CD4-positive, alpha-beta memory T cell (primary cell): ENCODE measurements at regions of chr11 and their contacts with region 1.

Region 1: DNA sequence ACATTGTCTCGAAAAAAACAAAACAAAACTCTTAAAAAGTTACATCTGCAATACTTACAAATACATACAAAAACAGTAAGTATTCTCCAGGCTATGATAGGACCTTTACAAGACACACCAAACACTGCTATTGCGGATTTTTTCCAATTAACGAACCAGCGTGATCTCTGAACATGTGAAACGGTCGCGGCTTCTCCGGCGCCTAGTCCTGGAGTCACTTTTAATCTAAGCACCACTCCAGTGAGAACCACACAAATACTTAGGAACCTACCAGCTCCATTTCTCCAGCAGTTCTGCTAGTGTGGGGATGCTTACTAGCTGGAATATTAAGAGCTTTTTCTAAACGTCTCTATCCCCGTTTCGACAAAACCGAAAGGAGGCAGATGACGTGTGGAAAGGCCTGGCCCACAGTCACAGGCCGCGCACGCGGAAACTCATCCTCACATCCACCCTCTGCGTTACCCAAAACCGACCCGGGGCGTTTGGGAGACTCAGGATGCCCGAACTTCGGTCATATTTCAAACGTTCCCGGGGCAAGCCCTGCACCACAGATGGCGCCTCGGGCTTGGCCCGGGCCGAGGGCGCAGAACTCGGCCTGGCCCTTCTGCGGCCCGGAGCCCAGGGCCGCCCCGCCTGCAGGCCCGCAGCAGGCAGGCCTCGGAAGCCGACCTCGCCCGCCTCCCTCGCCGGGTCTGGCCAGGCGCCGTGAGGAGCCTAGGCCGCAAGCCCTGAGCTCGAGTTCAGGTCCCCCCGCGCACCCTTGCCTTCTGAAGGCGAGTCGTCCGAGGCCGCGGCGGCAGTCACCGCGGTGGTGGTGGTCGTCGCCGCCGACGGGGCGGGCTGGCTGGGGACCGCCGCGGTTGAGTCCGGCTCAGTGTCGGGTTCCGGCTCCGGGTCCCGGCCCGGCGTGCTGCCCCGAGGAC is 575 bp downstream of the FNBP4 start:
- DNase-seq: peak; percentile 79 to 86 (median 83)
- H3K4me3 ChIP-seq: peak overlapping the region; percentile 83 to 85
- H3K4me3 Mint-ChIP-seq: peak overlapping the region; percentile 96 to 100 (median 96)
- H3K27ac ChIP-seq: peak overlapping the region; percentile 99
- H3K27ac Mint-ChIP-seq: peak overlapping the region; percentile 98 to 100 (median 100)
- H3K4me1 ChIP-seq: peaks cover 25% of the 10 kb centered on the region
- H3K4me1 Mint-ChIP-seq: peaks cover 18 to 41% (median 23%) of the 10 kb centered on the region in 4 donors
- H3K27me3 ChIP-seq: no peaks in the 10 kb centered on the region
- H3K27me3 Mint-ChIP-seq: no peaks in the 10 kb centered on the region

Region 2: DNA sequence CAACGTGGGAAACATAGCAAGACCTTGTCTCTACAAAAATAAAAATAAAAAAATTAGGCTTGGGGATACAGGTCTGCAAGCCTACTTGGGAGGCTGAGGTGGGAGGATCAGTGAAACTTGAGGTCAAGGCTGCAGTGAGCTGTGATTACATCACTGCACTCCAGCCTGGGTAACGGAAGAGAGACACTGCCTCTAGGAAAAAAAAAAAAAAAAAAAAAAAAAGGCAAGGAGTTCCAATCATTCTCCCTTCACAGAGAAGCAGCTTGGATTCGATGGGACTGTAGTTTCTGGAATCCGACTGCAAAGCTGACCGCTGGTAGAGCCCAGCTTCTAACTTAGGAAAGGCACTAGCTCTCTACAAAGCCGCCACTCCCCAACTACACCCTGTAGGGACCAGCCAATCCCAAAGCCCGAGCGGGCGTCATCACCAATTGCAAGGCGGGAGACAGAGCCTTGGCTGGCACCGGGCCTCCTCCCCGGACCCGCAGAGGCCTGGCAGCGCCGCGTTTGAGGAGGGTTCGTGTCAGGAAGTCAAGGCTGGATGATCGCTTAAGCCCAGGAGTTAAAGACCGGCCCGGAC is 552.5 kb before region 1 on chr11:
- CTCF ChIA-PET with region 1: no interaction called
- POLR2A ChIA-PET with region 1: interaction called, 7 read pairs
- intact Hi-C with region 1: loop called (anchors 5 kb)
- DNase-seq: peak; percentile 79 to 88 (median 80)
- H3K4me3 ChIP-seq: peak overlapping the region; percentile 57 to 95
- H3K4me3 Mint-ChIP-seq: peak overlapping the region; percentile 99 to 100 (median 99)
- H3K27ac ChIP-seq: peak overlapping the region; percentile 81
- H3K27ac Mint-ChIP-seq: peak overlapping the region; percentile 98 to 100 (median 99)
- H3K4me1 ChIP-seq: peaks cover 37% of the 10 kb centered on the region
- H3K4me1 Mint-ChIP-seq: peaks cover 23 to 39% (median 28%) of the 10 kb centered on the region in 4 donors
- H3K27me3 ChIP-seq: no peaks in the 10 kb centered on the region
- H3K27me3 Mint-ChIP-seq: no peaks in the 10 kb centered on the region

Region 3: GRCh38 chr11:47426061-47426956 is 340.3 kb before region 1 on chr11 and contains the start of gene PSMC3:
- CTCF ChIA-PET with region 1: no interaction called
- POLR2A ChIA-PET with region 1: no interaction called
- intact Hi-C with region 1: loop called (anchors 1 kb)
- DNase-seq: peak; percentile 94 to 97 (median 96)
- H3K4me3 ChIP-seq: peak within 1 kb of the TSS; percentile 64 to 91
- H3K4me3 Mint-ChIP-seq: peak within 1 kb of the TSS; percentile 99 to 100 (median 100)
- H3K27ac ChIP-seq: peak within 1 kb of the TSS; percentile 85
- H3K27ac Mint-ChIP-seq: peak within 1 kb of the TSS; percentile 92 to 99 (median 99)
- H3K4me1 ChIP-seq: peaks cover 18% of the 10 kb centered on the region
- H3K4me1 Mint-ChIP-seq: peaks cover 12 to 32% (median 22%) of the 10 kb centered on the region in 4 donors
- H3K27me3 ChIP-seq: no peaks in the 10 kb centered on the region
- H3K27me3 Mint-ChIP-seq: no peaks in the 10 kb centered on the region
- total RNA-seq, gene PSMC3: 53.9 to 59.6 TPM

Region 4: GRCh38 chr11:47578524-47579460 is 187.8 kb before region 1 on chr11 and contains the starts of genes KBTBD4 and NDUFS3:
- CTCF ChIA-PET with region 1: no interaction called
- POLR2A ChIA-PET with region 1: interaction called, 4 read pairs
- intact Hi-C with region 1: loop called (anchors 5 kb)
- DNase-seq: peak; percentile 87 to 90 (median 88)
- H3K4me3 ChIP-seq: peak within 1 kb of the TSS; percentile 80 to 93
- H3K4me3 Mint-ChIP-seq: peak within 1 kb of the TSS; percentile 97 to 100 (median 100)
- H3K27ac ChIP-seq: peak within 1 kb of the TSS; percentile 83
- H3K27ac Mint-ChIP-seq: peak within 1 kb of the TSS; percentile 96 to 100 (median 100)
- H3K4me1 ChIP-seq: peaks cover 42% of the 10 kb centered on the region
- H3K4me1 Mint-ChIP-seq: peaks cover 19 to 48% (median 35%) of the 10 kb centered on the region in 4 donors
- H3K27me3 ChIP-seq: no peaks in the 10 kb centered on the region
- H3K27me3 Mint-ChIP-seq: peaks cover 0 to 1% of the 10 kb centered on the region in 2 donors
- total RNA-seq, gene KBTBD4: 21.2 to 22.5 TPM
- total RNA-seq, gene NDUFS3: 70.9 to 71.0 TPM

Region 5: DNA sequence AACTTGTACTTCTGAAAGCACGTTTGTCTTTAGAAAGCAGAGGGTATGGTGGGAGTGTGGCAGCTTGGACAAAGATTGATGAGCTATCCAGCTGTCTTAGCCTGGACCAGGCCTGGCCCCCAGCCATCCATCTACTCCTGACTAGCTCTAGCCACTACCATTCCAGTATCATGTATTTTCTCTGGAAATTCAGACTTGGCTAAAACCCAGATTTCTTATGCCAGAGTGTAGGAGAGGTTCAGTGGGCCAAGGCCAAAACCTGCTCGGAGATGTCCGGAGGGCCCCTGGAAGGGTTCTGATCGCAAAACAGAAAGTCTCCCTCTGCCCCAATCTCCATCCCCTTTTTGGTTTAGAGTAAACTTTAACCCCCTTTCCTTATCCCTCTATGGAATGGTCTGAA is 99.4 kb before region 1 on chr11:
- CTCF ChIA-PET with region 1: no interaction called
- POLR2A ChIA-PET with region 1: no interaction called
- intact Hi-C with region 1: no loop called
- DNase-seq: no peak
- H3K4me3 ChIP-seq: no peak overlapping the region
- H3K4me3 Mint-ChIP-seq: no peak overlapping the region
- H3K27ac ChIP-seq: no peak overlapping the region
- H3K27ac Mint-ChIP-seq: no peak overlapping the region
- H3K4me1 ChIP-seq: no peaks in the 10 kb centered on the region
- H3K4me1 Mint-ChIP-seq: peaks cover 0 to 2% (median under 1%) of the 10 kb centered on the region in 4 donors
- H3K27me3 ChIP-seq: no peaks in the 10 kb centered on the region
- H3K27me3 Mint-ChIP-seq: peaks cover 0 to 1% of the 10 kb centered on the region in 2 donors

Region 6: DNA sequence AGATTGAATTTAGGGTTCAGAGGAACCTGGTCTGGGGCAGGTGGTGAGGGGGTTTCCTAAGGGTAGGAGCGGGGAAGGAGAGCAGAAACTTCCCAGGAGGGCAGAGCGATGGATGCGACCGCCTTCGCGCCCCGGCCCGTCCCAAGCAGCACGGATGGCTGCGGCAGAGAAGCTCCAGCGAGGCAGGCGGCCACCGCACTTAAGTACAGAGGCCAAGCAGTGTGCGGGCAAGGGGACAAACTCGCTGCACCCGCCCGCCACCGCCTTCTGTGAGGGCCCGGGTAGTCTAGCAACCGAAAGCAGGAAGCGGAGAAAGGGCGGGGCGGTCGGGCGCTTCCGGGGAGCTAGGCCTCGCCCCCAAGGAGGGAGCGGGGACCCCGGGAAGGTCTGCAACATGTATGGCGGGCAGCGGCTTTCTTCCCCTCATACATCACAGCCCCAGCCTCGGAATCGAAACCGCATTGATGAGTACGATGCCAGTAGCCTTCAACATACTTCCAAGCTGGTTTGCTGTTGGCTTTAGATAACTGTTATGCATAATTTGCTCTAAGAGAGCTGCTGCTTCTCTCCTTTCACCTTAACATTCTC is 51.4 kb before region 1 on chr11 and contains the start of gene AGBL2:
- CTCF ChIA-PET with region 1: no interaction called
- POLR2A ChIA-PET with region 1: interaction called, 36 read pairs
- intact Hi-C with region 1: loop called (anchors 1 kb)
- DNase-seq: peak; percentile 79 to 87 (median 80)
- H3K4me3 ChIP-seq: peak within 1 kb of the TSS; percentile 76 to 96
- H3K4me3 Mint-ChIP-seq: peak within 1 kb of the TSS; percentile 94 to 99 (median 98)
- H3K27ac ChIP-seq: peak within 1 kb of the TSS; percentile 92
- H3K27ac Mint-ChIP-seq: peak within 1 kb of the TSS; percentile 97 to 99 (median 98)
- H3K4me1 ChIP-seq: peaks cover 14% of the 10 kb centered on the region
- H3K4me1 Mint-ChIP-seq: peaks cover 7 to 25% (median 16%) of the 10 kb centered on the region in 4 donors
- H3K27me3 ChIP-seq: no peaks in the 10 kb centered on the region
- H3K27me3 Mint-ChIP-seq: no peaks in the 10 kb centered on the region
- total RNA-seq, gene AGBL2: 7.8 to 8.1 TPM

Region 7: DNA sequence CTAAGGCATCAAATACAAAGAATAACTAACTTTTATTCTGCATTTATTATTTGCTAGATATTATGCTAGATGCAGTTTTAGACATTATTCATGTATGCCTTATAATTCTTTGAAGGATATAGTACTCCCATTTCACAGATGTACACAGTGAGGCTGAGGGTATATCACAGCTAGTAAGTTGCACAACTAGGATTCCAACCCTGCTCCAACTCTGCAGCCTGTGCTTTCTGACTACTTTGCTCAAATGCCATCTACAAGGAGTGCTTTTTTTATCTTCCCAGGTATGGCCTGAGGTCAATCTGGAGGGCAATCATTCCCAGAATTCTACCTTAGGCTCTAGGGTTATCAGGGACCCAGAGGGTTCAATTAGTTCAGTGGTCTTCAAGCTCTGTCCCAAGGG is 53.2 kb after region 1 on chr11:
- CTCF ChIA-PET with region 1: no interaction called
- POLR2A ChIA-PET with region 1: no interaction called
- intact Hi-C with region 1: no loop called
- DNase-seq: no peak
- H3K4me3 ChIP-seq: no peak overlapping the region
- H3K4me3 Mint-ChIP-seq: no peak overlapping the region
- H3K27ac ChIP-seq: no peak overlapping the region
- H3K27ac Mint-ChIP-seq: peak overlapping the region in 3 of 7 donors; percentile 36 to 69 (median 61)
- H3K4me1 ChIP-seq: no peaks in the 10 kb centered on the region
- H3K4me1 Mint-ChIP-seq: no peaks in the 10 kb centered on the region
- H3K27me3 ChIP-seq: no peaks in the 10 kb centered on the region
- H3K27me3 Mint-ChIP-seq: no peaks in the 10 kb centered on the region

Region 8: DNA sequence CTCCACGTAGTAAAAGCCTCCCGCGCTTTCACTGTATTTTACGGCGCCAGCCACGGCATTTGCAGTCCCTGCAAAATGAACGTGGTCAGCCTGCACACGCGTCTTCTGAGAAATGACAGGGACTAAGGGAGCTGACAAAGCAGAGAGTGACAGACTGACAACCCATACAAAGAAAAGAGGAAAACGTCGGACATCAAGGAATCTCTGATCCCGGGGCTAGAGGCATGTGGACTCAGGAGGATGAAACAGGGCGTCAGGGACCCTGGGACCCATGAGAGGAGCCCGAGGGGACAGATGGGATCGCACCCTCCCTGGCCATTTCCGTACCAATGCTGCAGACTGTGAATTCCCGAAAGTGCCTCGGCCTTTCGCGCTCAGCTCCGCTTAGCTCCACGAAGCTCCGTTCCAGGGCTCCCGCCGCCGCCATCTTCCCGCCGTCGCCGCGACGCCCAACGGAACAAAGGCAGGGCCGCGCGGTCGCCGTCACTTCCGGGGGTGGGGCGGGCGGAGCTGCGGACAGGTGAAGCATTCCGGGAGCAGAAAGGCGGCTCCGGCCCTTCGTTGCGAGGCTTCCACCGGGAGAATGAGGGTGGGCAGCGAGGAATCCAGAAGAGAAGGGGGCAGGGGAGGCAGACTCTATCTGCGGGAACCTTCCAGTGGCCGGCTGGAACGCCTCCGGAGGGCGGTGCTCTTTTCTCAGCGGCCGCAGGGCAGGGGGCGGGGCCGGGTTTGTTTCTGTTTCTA is 81.5 kb after region 1 on chr11 and contains the start of gene NUP160:
- CTCF ChIA-PET with region 1: interaction called, 3 read pairs
- POLR2A ChIA-PET with region 1: interaction called, 17 read pairs
- intact Hi-C with region 1: loop called (anchors 1 kb)
- DNase-seq: peak; percentile 85 to 88 (median 86)
- H3K4me3 ChIP-seq: peak within 1 kb of the TSS; percentile 70 to 91
- H3K4me3 Mint-ChIP-seq: peak within 1 kb of the TSS; percentile 95 to 100 (median 99)
- H3K27ac ChIP-seq: peak within 1 kb of the TSS; percentile 97
- H3K27ac Mint-ChIP-seq: peak within 1 kb of the TSS; percentile 93 to 100 (median 99)
- H3K4me1 ChIP-seq: peaks cover 64% of the 10 kb centered on the region
- H3K4me1 Mint-ChIP-seq: peaks cover 31 to 72% (median 51%) of the 10 kb centered on the region in 4 donors
- H3K27me3 ChIP-seq: no peaks in the 10 kb centered on the region
- H3K27me3 Mint-ChIP-seq: no peaks in the 10 kb centered on the region
- total RNA-seq, gene NUP160: 57.6 to 62.2 TPM